ENCODE measurements at regions of chr5 and their contacts with region 1.

Region 1: GRCh38 chr5:118098716-118099115 is 889.6 kb downstream of the DTWD2 start:
- DNase-seq: no peak
- CTCF ChIP-seq: no peak

Region 2: GRCh38 chr5:118088444-118088843 is 10.3 kb before region 1 on chr5:
- CTCF ChIA-PET with region 1: interaction called, 11 read pairs
- POLR2A ChIA-PET with region 1: no interaction called
- DNase-seq: no peak
- CTCF ChIP-seq: no peak

Region 3: DNA sequence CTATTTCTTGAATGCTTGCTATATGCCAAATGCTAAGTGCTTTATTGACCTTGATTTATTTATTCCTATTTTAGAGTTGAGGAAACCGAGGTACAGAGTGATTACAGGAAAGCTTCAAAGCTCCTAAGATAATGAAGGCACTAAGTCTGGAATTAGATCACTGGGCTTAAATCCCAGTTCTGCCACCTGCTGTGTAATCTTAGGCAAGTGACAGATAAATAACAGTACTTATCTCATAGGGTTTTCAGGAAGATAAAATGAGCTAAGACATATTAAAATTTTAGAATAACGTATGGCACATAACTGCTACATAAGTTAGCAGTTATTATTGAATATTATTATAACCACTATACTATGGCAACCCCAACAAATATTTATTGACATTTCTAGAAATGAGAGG is 45.8 kb after region 1 on chr5:
- CTCF ChIA-PET with region 1: no interaction called
- POLR2A ChIA-PET with region 1: no interaction called
- DNase-seq: no peak
- CTCF ChIP-seq: no peak

Measured in GM10248 (cell line).